Dorsolateral prefrontal cortex (tissue), 120 donors: ENCODE measurements at regions of chr16 and their contacts with region 1.

Region 1: GRCh38 chr16:12573730-12574383 is 229.8 kb downstream of the CPPED1 start:
- DNase-seq: peak in 9 of 10 donors; percentile 30 to 76 (median 57)
- H3K4me3 ChIP-seq: no peak overlapping the region
- H3K27ac ChIP-seq: peak overlapping the region in 2 of 59 donors; percentile 5 to 14
- H3K27me3 ChIP-seq: peaks cover 0 to 1% (median 0%) of the 10 kb centered on the region in 45 donors
- CTCF ChIP-seq: peak; percentile 47 to 85 (median 70)

Region 2: DNA sequence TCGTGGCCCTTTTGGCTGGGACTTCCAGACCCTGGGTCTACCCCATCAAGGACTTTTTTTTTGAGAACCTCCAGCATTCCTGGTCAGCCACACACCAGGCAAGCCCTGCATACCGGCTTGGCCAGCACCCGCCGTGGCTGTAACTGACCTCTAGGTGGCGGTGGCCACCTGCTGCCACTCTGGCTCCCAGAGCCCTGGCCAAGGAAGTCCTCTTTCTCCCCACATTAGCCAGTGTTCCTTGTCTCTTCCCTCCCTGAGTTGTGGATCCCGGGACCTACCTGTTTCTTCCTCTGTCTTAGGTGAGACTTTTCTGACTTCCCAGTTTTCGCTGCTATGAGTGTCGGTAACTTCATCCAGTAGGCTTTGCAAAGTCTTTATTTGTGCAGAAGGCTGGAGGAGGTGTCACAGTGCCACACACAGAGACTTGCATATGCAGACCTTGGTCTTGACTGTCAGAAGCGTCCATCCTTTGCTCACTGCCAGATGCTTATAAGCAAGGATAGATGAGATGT is 118.5 kb before region 1 on chr16:
- intact Hi-C with region 1: loop called (anchors 10 kb)
- DNase-seq: peak; percentile 14 to 82 (median 67)
- H3K4me3 ChIP-seq: no peak overlapping the region
- H3K27ac ChIP-seq: peak overlapping the region in 1 of 59 donors; percentile 21
- H3K27me3 ChIP-seq: no peaks in the 10 kb centered on the region
- CTCF ChIP-seq: peak; percentile 50 to 95 (median 84)

Region 3: DNA sequence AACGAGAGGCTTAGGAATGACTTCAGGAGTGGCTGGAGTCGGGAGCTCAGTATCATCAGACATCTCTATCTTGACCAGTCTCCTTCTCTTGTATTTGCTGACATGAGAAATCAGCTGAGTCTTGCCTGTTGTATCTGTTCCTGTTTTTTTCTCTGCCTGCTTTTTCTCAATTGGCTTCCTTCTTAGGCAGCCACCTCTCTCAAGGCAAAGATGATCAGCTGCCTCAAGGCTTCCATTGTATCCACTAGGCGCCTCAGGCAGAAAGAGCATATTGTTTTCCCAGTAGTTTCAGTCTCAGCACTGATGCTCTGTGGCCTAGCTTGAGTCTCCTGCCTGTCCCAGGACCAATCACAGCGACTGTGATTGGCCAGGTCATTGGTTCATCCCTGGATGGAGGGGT is 76.3 kb before region 1 on chr16:
- intact Hi-C with region 1: loop called in 1 of 2 experiments (anchors 5 kb)
- DNase-seq: peak in 2 of 10 donors; percentile 9 to 22
- H3K4me3 ChIP-seq: no peak overlapping the region
- H3K27ac ChIP-seq: peak overlapping the region in 40 of 59 donors; percentile 4 to 77 (median 47)
- H3K27me3 ChIP-seq: no peaks in the 10 kb centered on the region
- CTCF ChIP-seq: no peak

Region 4: DNA sequence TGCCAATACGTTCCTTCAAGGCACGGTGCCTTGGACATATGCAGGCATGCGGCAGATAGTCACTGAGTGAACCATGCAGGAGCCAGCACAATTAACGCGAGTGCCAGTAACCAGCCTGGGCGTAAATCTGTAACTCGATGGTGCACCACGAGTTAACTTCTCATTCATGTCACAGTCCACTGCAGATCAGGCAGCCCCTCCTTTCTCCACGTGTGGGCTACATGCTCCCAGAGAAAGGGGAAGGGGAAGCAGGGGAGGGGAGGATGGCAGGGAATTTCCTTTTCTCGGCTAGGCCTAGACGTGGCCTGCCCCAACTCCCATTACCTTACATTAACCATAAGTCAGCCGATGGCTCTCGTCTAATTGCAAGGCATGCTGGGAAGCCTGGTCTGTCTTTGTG is 58.1 kb before region 1 on chr16:
- intact Hi-C with region 1: loop called in 1 of 2 experiments (anchors 5 kb)
- DNase-seq: peak in 1 of 10 donors; percentile 38
- H3K4me3 ChIP-seq: no peak overlapping the region
- H3K27ac ChIP-seq: peak overlapping the region in 5 of 59 donors; percentile 6 to 39 (median 31)
- H3K27me3 ChIP-seq: no peaks in the 10 kb centered on the region
- CTCF ChIP-seq: no peak

Region 5: GRCh38 chr16:12646490-12647274 is 72.8 kb after region 1 on chr16:
- intact Hi-C with region 1: no loop called
- DNase-seq: peak in 8 of 10 donors; percentile 41 to 67 (median 54)
- H3K4me3 ChIP-seq: no peak overlapping the region
- H3K27ac ChIP-seq: peak overlapping the region in 54 of 59 donors; percentile 10 to 89 (median 75)
- H3K27me3 ChIP-seq: no peaks in the 10 kb centered on the region
- CTCF ChIP-seq: no peak

Region 6: DNA sequence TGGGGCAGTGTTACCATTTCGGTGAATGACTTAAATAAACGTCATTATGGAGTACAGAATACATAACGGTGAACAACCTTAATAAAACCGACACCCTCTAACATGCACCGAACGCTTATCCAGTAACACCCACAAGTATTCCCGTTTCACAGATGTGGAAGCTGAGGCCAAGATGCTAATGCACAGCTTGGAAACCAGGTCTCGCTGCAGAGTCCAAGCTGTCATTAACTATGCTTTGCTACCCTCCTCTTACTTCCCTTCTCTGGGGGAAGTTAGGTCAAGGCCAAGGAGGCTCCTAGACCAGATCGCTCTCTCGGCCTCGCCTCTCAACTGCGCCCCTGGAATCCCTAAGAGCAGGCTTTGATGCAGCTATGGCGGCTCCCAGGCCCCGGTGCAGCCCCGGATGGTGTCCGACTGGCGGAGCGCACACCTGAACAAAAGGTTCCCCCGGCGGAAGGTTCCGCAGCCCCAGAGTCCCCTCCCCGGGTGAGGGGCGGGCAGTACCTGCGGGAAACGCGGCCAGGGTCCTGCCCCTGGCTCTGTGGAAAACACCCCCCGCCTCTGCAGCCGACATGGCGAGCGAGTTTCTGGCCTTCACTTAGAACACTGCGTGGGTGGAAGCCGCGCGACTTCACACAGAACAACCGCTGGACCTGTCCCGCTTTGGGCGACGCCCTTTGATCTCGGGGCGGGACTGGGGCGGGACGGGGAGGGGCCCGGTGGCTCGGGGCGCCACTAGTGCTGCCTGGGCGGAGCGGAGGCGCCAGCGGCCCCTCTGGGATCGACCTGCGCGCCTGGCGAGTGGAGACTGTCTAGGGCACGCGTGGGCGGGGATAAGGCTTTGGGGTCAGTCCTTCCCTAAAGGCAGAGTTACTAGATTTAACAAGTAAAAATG is 229.6 kb after region 1 on chr16 and contains the start of gene CPPED1:
- intact Hi-C with region 1: loop called in 1 of 2 experiments (anchors 10 kb)
- DNase-seq: peak; percentile 74 to 94 (median 90)
- H3K4me3 ChIP-seq: peak within 1 kb of the TSS; percentile 48 to 89 (median 74)
- H3K27ac ChIP-seq: peak within 1 kb of the TSS; percentile 11 to 96 (median 88)
- H3K27me3 ChIP-seq: no peaks in the 10 kb centered on the region
- CTCF ChIP-seq: peak in 27 of 56 donors; percentile 3 to 57 (median 30)
- total RNA-seq, gene CPPED1: 8.3 to 42.3 (median 17.7) TPM

Region 7: GRCh38 chr16:12819126-12820117 is 245.6 kb after region 1 on chr16:
- intact Hi-C with region 1: loop called in 1 of 2 experiments (anchors 5 kb)
- DNase-seq: peak in 5 of 10 donors; percentile 27 to 65 (median 52)
- H3K4me3 ChIP-seq: no peak overlapping the region
- H3K27ac ChIP-seq: no peak overlapping the region
- H3K27me3 ChIP-seq: no peaks in the 10 kb centered on the region
- CTCF ChIP-seq: peak; percentile 20 to 85 (median 71)